Heart left ventricle (tissue), 16 donors: ENCODE measurements at regions of chr7 and their contacts with region 1.

Region 1: DNA sequence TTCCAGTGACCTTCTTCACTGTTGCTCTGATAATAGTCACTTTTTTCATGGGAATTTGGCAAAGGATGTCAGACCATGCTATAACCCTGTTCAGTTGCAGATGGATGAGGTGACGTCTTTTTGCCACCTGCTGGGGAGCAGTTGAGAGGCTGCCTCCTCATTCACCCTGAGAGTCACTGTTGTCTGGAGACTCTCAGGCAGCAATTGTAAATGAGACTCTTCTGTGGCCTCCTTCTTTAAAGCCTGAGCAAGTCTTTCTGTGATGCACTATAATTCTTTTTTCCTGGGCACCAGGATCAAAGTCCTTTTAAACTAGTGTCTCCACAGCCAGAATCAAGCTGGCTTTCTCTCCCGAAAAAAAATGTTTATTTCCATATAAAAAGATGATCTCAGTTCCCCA is 345.1 kb downstream of the ARL4A start:
- DNase-seq: no peak
- ATAC-seq: peak in 2 of 4 donors; percentile 49 to 53
- H3K4me3 ChIP-seq: no peak overlapping the region
- H3K27ac ChIP-seq: no peak overlapping the region
- H3K4me1 ChIP-seq: peaks cover 0 to 16% (median 2%) of the 10 kb centered on the region in 12 donors
- H3K27me3 ChIP-seq: no peaks in the 10 kb centered on the region
- CTCF ChIP-seq: peak in 1 of 12 donors; percentile 15
- POLR2A ChIP-seq: no peak

Region 2: DNA sequence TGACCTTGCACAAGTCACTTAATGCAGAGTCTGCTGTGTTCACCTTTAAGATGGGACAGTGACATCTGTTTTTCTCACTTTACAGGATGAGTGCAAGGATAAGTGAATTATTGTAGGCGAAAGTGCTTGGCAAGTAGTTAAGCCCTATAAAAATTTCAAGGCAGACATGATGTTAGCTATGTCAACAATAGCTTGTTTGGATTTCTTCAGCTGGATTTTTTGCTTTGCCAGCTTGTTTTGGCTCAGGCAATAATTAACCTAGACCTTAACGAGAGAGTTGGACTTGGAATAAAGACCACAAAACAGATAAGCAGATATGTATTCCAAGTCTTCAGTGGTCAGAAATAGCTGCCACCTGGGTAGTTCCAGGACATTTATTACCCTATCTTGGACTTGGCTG is 90.0 kb before region 1 on chr7:
- intact Hi-C with region 1: loop called in 1 of 10 experiments (anchors 10 kb)
- DNase-seq: no peak
- ATAC-seq: peak in 1 of 4 donors; percentile 9
- H3K4me3 ChIP-seq: no peak overlapping the region
- H3K27ac ChIP-seq: peak overlapping the region in 1 of 12 donors; percentile 19
- H3K4me1 ChIP-seq: peaks cover 0 to 10% (median 0%) of the 10 kb centered on the region in 12 donors
- H3K27me3 ChIP-seq: no peaks in the 10 kb centered on the region
- CTCF ChIP-seq: no peak
- POLR2A ChIP-seq: no peak